Gastrocnemius medialis (tissue), 4 donors: ENCODE measurements at regions of chr5 and their contacts with region 1.

Region 1: DNA sequence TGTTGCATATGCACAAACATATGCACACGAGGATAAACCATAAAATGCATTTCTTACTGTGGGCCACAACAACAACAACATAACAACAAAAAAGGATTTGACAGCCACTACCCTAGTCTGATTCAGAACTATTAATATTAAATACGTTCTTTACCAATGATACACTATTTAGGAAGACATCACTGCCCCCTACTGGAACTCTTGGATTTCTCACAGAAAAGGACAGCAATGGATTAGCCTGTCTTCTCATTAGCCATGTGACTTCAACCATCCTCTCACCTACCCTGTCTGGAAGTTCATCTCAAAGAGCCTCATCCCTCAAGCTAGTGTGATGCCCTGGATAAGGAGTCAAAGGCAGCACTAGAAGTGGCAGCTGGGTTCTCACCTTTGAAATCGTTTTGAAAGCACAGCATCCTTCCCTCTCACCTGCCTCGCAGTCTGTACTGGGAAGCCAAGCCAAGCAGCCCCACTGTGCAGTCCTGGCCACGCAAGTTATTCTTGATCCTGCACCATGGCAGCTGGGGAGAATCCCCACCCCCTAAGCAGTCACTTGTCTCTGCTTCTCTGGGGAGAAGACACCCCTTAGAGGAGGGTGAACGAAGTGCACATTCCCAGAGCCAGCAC is 64.6 kb downstream of the SH3TC2 start:
- DNase-seq: peak in 1 of 2 donors; percentile 30
- ATAC-seq: peak; percentile 55 to 68
- H3K4me3 ChIP-seq: no peak overlapping the region
- H3K27ac ChIP-seq: no peak overlapping the region
- H3K4me1 ChIP-seq: peaks cover 45 to 60% of the 10 kb centered on the region in 2 donors
- H3K27me3 ChIP-seq: no peaks in the 10 kb centered on the region
- CTCF ChIP-seq: peak; percentile 64 to 79 (median 71)
- POLR2A ChIP-seq: no peak

Region 2: DNA sequence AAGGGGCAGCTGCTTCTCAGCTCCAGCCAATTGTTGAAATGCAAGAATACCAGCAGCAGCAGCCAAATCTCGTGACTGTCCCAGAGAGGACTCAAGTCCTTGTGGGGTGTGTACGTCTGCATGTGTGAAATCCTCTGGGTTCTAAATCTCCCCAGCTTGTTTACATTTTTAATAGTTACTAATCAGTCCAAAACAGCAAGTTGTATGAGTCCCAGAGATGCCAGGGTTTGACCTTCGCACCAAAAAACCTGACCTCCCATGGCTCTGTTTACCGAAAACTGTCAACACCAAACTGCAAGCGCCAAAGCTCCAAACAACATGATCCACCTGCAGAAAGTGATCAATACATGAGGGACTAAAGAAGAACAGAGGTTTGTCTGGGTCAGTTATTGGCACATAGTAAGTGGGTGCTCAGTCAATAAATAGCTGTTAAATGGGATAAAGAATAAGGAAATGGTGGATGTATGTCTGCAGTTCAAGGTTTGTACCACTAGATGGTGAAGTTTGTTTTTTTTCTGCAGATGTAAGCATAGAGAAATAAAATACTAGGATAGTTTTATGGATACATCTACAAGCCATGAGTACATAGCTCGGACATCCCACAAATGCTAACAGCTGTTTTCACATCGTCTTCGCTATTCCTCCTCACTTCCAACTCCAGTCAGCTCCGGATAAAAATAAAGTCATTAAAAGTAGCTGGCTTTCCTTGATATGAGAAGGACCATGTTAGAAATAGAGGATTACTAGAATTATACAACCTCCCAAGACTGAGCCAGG is 257.1 kb before region 1 on chr5:
- in situ Hi-C with region 1: loop called in 2 of 4 experiments (anchors 10 kb)
- intact Hi-C with region 1: loop called (anchors 2 kb)
- DNase-seq: peak; percentile 73 to 77
- ATAC-seq: peak; percentile 95 to 97
- H3K4me3 ChIP-seq: peak overlapping the region in 3 of 4 donors; percentile 14 to 21 (median 15)
- H3K27ac ChIP-seq: peak overlapping the region; percentile 65 to 77 (median 73)
- H3K4me1 ChIP-seq: peaks cover 9 to 20% of the 10 kb centered on the region in 2 donors
- H3K27me3 ChIP-seq: no peaks in the 10 kb centered on the region
- CTCF ChIP-seq: peak; percentile 81 to 85 (median 83)
- POLR2A ChIP-seq: no peak

Region 3: DNA sequence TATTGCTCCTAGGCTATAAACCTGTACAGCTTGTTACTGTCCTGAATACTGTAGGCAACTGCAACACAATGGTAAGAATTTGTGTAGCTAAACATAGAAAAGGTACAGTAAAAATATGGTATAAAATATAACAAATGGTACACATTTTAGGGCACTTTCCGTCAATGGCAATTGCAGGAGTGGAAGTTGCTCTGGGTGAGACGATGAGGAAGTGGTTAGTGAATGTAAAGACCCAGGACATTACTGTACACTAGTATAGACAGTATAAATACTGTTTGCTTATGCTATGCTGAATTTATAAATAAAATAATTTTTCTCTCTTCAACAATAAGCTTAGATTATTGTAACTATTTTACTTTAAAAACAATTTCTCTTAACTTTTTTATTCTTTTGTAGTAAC is 187.5 kb before region 1 on chr5:
- in situ Hi-C with region 1: loop called in 1 of 4 experiments (anchors 10 kb)
- intact Hi-C with region 1: no loop called
- DNase-seq: no peak
- ATAC-seq: no peak
- H3K4me3 ChIP-seq: no peak overlapping the region
- H3K27ac ChIP-seq: no peak overlapping the region
- H3K4me1 ChIP-seq: peaks cover 11 to 19% of the 10 kb centered on the region in 2 donors
- H3K27me3 ChIP-seq: no peaks in the 10 kb centered on the region
- CTCF ChIP-seq: no peak
- POLR2A ChIP-seq: no peak

Region 4: DNA sequence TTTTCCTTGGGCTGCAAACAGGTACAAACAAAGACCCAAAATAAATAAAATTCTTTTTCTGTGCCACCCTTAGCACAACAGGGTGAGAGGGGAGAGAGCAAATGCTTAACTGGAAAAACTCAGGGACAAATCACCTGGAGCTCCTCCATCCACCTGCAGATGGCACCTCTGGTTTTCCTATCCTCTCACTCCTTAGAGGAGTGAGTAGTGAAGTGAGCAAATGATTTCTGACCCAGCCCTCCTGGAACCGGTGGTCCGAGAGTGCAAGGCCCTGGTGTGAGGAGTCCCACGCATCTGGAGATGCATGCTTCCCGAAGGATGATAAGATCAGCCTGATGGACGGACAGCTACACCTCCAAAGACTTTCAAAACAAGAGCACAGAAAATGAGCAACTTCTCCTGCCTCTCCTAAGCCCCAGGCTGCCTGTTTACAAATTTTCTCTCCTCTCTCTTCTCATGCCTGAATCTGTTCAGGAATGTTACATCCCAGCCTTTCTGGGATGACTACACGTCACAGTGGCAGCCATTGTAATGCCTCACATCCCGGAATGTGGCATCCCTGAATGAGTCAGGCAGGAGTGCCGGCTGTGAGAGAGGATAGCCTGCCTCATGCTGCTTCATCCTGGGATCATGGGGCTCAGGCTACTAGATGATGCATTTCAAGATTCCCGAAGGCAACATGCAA is 85.4 kb before region 1 on chr5:
- in situ Hi-C with region 1: no loop called
- intact Hi-C with region 1: loop called (anchors 1 kb)
- DNase-seq: no peak
- ATAC-seq: peak; percentile 41 to 53
- H3K4me3 ChIP-seq: no peak overlapping the region
- H3K27ac ChIP-seq: no peak overlapping the region
- H3K4me1 ChIP-seq: peaks cover 17 to 18% of the 10 kb centered on the region in 2 donors
- H3K27me3 ChIP-seq: no peaks in the 10 kb centered on the region
- CTCF ChIP-seq: peak; percentile 16 to 58 (median 38)
- POLR2A ChIP-seq: no peak

Region 5: DNA sequence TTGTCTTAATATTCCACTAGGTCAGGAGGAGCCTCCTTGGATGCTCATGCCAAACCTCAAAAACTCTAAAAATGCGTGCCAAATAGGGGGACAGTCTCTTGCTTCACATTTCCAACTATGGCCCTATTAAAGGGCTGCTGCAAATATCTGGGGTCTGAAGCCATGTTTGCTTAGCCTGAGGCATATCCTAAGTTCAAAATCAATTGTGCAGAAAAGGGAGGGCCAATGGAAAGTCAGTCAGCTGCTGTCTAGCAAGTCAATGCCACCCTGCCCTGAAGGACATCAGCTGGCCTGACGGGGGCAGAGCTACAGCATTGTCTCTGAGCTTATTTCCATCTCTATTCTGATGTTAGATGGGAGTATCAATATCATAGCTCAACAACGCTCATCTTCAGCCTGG is 29.0 kb before region 1 on chr5:
- in situ Hi-C with region 1: no loop called
- intact Hi-C with region 1: loop called (anchors 2 kb)
- DNase-seq: peak in 1 of 2 donors; percentile 53
- ATAC-seq: no peak
- H3K4me3 ChIP-seq: no peak overlapping the region
- H3K27ac ChIP-seq: peak overlapping the region; percentile 90 to 96 (median 93)
- H3K4me1 ChIP-seq: peaks cover 72 to 83% of the 10 kb centered on the region in 2 donors
- H3K27me3 ChIP-seq: no peaks in the 10 kb centered on the region
- CTCF ChIP-seq: peak in 2 of 5 experiments; percentile 27 to 35
- POLR2A ChIP-seq: no peak